ENCODE measurements at regions of chr5 and their contacts with region 1.

Region 1: GRCh38 chr5:134184155-134185135 is 7.7 kb upstream of the SKP1 start:
- DNase-seq: peak; percentile 87
- H3K4me3 Mint-ChIP-seq: no peak overlapping the region
- H3K27ac Mint-ChIP-seq: no peak overlapping the region
- H3K4me1 Mint-ChIP-seq: no peaks in the 10 kb centered on the region
- H3K27me3 Mint-ChIP-seq: no peaks in the 10 kb centered on the region
- CTCF ChIP-seq: peak; percentile 99

Region 2: GRCh38 chr5:133698646-133699526 is 485.6 kb before region 1 on chr5:
- CTCF ChIA-PET with region 1: no interaction called
- POLR2A ChIA-PET with region 1: no interaction called
- intact Hi-C with region 1: no loop called
- DNase-seq: no peak
- H3K4me3 Mint-ChIP-seq: no peak overlapping the region
- H3K27ac Mint-ChIP-seq: no peak overlapping the region
- H3K4me1 Mint-ChIP-seq: no peaks in the 10 kb centered on the region
- H3K27me3 Mint-ChIP-seq: peaks cover 43% of the 10 kb centered on the region
- CTCF ChIP-seq: no peak

Region 3: GRCh38 chr5:134204575-134204974 is 20.1 kb after region 1 on chr5:
- CTCF ChIA-PET with region 1: interaction called, 20 read pairs
- POLR2A ChIA-PET with region 1: interaction called, 3 read pairs
- intact Hi-C with region 1: no loop called
- DNase-seq: no peak
- H3K4me3 Mint-ChIP-seq: no peak overlapping the region
- H3K27ac Mint-ChIP-seq: no peak overlapping the region
- H3K4me1 Mint-ChIP-seq: peaks cover 23% of the 10 kb centered on the region
- H3K27me3 Mint-ChIP-seq: no peaks in the 10 kb centered on the region
- CTCF ChIP-seq: no peak

Region 4: DNA sequence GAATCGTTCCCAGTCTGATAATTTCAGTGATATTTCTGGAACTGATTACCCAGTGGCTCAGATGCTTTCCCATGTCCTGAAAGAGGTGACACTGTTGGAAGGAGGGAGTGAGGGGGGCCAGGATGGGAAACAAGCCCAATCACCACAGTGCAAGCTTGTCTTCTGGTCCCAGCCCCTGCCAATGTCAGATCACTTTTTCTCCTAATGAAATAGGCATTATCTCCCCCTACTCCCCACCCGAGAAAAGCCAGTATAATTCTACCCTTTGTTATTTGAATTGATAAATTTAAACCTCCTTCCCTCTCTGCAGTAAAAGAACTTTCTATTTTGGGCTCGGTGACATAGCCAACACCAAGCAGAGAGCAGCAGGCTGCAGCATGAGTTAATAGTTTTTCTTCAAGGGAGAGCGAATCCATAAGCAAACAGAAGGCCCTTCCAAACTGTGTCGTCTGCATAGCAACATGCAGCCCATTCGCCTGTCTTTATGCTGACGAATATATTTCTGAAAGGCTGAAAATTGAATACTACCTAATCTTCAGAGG is 56.0 kb after region 1 on chr5:
- CTCF ChIA-PET with region 1: interaction called, 47 read pairs
- POLR2A ChIA-PET with region 1: no interaction called
- intact Hi-C with region 1: no loop called
- DNase-seq: no peak
- H3K4me3 Mint-ChIP-seq: no peak overlapping the region
- H3K27ac Mint-ChIP-seq: no peak overlapping the region
- H3K4me1 Mint-ChIP-seq: peaks cover 7% of the 10 kb centered on the region
- H3K27me3 Mint-ChIP-seq: no peaks in the 10 kb centered on the region
- CTCF ChIP-seq: no peak

Region 5: DNA sequence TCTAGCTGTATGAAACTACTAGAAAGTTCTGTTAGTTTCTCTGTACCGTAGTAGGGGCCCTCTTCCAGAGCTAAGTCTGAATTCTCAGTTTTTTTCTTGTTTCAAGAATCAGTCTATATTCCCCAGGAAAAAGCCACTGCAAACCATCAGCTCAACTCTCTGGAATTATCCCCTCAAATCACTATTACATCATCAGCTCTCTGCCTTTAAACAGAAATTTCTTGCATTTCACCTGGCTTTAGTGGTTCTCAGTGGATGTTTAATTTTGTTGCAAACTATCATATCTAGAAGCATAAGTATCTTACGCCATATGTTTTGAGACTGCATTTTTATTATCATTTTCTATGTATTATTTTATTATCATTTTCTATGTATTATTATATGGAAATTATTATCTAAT is 96.6 kb after region 1 on chr5:
- CTCF ChIA-PET with region 1: interaction called, 425 read pairs
- POLR2A ChIA-PET with region 1: interaction called, 3 read pairs
- intact Hi-C with region 1: no loop called
- DNase-seq: no peak
- H3K4me3 Mint-ChIP-seq: no peak overlapping the region
- H3K27ac Mint-ChIP-seq: no peak overlapping the region
- H3K4me1 Mint-ChIP-seq: no peaks in the 10 kb centered on the region
- H3K27me3 Mint-ChIP-seq: no peaks in the 10 kb centered on the region
- CTCF ChIP-seq: no peak

Measured in MCF 10A (cell line).